Activated B cell treated with CpG ODN at 0.5 μM for 24 hours (primary cell): ENCODE measurements at regions of chr10 and their contacts with region 1.

Region 1: DNA sequence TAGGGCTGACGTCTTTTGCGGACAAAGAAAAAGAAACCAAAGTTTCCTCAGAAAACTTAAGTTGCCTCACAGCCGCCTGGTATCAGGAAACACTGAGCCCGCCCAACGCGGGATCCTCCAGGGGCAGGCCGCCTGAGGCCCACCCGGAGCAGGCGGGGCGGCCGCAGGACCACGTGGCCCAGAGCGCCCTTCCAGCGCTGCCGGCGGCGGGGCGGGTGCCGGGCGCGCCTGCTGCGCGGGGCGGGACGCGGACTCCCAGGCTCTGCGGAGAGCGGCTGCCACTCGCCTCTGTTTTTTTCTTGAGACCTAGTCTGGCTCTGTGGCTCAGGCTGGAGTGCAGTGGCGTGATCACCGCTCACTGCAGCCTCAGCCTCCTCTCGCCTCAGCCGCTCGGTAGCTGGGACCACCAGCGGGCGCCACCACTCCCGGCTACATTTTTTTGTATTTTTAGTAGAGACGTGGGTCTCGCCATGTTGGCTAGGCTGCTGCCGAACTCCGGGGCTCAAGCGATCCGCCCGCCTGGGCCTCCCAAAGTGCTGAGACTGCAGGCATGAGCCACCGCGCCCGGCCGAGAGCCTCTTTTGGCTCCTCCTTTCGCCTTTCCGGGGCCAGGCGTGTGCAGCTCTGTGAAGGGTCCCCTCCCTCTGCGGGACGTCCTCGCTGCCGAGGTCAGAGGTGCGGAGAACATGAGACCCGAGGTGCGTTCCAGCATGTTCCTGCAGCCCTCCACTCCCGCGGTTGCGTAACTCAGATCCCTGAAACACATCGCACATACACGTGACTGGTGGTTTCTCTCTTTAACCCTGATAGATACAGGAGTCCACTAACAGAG is 11.6 kb upstream of the HNRNPF start:
- DNase-seq: peak; percentile 73
- ATAC-seq: peak; percentile 83
- H3K4me3 Mint-ChIP-seq: peak overlapping the region; percentile 88
- H3K27ac Mint-ChIP-seq: peak overlapping the region; percentile 94
- H3K4me1 Mint-ChIP-seq: peaks cover 36% of the 10 kb centered on the region
- H3K27me3 Mint-ChIP-seq: no peaks in the 10 kb centered on the region
- CTCF ChIP-seq: no peak

Region 2: GRCh38 chr10:43436400-43437140 is 16.0 kb after region 1 on chr10 and contains the start of gene ZNF487:
- CTCF ChIA-PET with region 1: interaction called, 4 read pairs
- POLR2A ChIA-PET with region 1: interaction called, 27 read pairs
- intact Hi-C with region 1: loop called (anchors 1 kb)
- DNase-seq: peak; percentile 97
- ATAC-seq: peak; percentile 90
- H3K4me3 Mint-ChIP-seq: peak within 1 kb of the TSS; percentile 91
- H3K27ac Mint-ChIP-seq: peak within 1 kb of the TSS; percentile 95
- H3K4me1 Mint-ChIP-seq: peaks cover 34% of the 10 kb centered on the region
- H3K27me3 Mint-ChIP-seq: no peaks in the 10 kb centered on the region
- CTCF ChIP-seq: no peak
- total RNA-seq, gene ZNF487: 2.9 and 3.4 TPM in 2 replicates

Region 3: DNA sequence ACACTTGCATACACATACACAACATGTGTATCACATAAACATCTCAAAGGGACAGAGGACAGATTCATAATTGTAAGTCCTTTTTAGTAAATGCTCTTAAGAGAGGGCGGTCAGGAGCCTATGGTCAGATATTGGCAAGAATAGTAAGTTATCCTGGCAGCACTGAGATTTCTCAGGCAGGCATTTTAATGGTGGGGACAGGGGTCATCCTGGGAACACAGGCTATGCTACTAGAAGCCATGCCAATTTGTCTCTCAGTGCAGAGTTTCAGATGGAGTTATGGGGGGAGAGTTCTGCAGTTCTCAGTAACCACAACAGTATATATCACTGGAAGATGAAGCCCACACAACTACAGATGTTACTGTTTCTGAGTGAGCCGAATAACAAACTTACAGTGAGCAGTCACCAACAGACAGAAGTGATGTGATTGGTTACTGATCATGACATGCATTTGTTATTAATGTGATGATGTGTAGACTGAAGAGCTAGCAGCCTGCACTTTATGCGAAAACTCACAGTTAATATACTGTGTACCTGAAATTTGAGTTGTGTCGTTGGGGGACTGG is 32.8 kb after region 1 on chr10:
- CTCF ChIA-PET with region 1: no interaction called
- POLR2A ChIA-PET with region 1: interaction called, 22 read pairs
- intact Hi-C with region 1: no loop called
- DNase-seq: no peak
- ATAC-seq: no peak
- H3K4me3 Mint-ChIP-seq: peak overlapping the region; percentile 69
- H3K27ac Mint-ChIP-seq: peak overlapping the region; percentile 98
- H3K4me1 Mint-ChIP-seq: peaks cover 44% of the 10 kb centered on the region
- H3K27me3 Mint-ChIP-seq: no peaks in the 10 kb centered on the region
- CTCF ChIP-seq: no peak